Transverse colon (tissue), 4 donors: ENCODE measurements at regions of chr10 and their contacts with region 1.

Region 1: GRCh38 chr10:133600657-133601056 is 25.9 kb downstream of the FRG2B start:
- DNase-seq: no peak
- H3K4me3 ChIP-seq: no peak overlapping the region
- H3K27ac ChIP-seq: no peak overlapping the region
- H3K4me1 ChIP-seq: no peaks in the 10 kb centered on the region
- H3K27me3 ChIP-seq: peaks cover 73% of the 10 kb centered on the region
- CTCF ChIP-seq: no peak
- EP300 ChIP-seq: no peak
- POLR2A ChIP-seq: no peak

Region 2: GRCh38 chr10:132920121-132920925 is 680.3 kb before region 1 on chr10:
- in situ Hi-C with region 1: no loop called
- intact Hi-C with region 1: no loop called
- DNase-seq: no peak
- H3K4me3 ChIP-seq: no peak overlapping the region
- H3K27ac ChIP-seq: no peak overlapping the region
- H3K4me1 ChIP-seq: no peaks in the 10 kb centered on the region
- H3K27me3 ChIP-seq: peaks cover 17% of the 10 kb centered on the region
- CTCF ChIP-seq: no peak
- EP300 ChIP-seq: no peak
- POLR2A ChIP-seq: no peak

Region 3: GRCh38 chr10:133373104-133373624 is 227.5 kb before region 1 on chr10 and contains the start of gene ECHS1:
- in situ Hi-C with region 1: no loop called
- intact Hi-C with region 1: no loop called
- DNase-seq: peak; percentile 97
- H3K4me3 ChIP-seq: peak within 1 kb of the TSS; percentile 60 to 87 (median 78)
- H3K27ac ChIP-seq: peak within 1 kb of the TSS; percentile 91 to 92 (median 92)
- H3K4me1 ChIP-seq: peaks cover 5 to 30% (median 21%) of the 10 kb centered on the region in 4 donors
- H3K27me3 ChIP-seq: no peaks in the 10 kb centered on the region
- CTCF ChIP-seq: no peak
- EP300 ChIP-seq: no peak
- POLR2A ChIP-seq: peak; percentile 77
- total RNA-seq, gene ECHS1: 48.3 to 165 (median 120) TPM

Region 4: GRCh38 chr10:133438711-133439273 is 161.9 kb before region 1 on chr10:
- in situ Hi-C with region 1: no loop called
- intact Hi-C with region 1: no loop called
- DNase-seq: no peak
- H3K4me3 ChIP-seq: no peak overlapping the region
- H3K27ac ChIP-seq: no peak overlapping the region
- H3K4me1 ChIP-seq: no peaks in the 10 kb centered on the region
- H3K27me3 ChIP-seq: no peaks in the 10 kb centered on the region
- CTCF ChIP-seq: peak in 1 of 5 experiments; percentile 8
- EP300 ChIP-seq: no peak
- POLR2A ChIP-seq: no peak

Region 5: DNA sequence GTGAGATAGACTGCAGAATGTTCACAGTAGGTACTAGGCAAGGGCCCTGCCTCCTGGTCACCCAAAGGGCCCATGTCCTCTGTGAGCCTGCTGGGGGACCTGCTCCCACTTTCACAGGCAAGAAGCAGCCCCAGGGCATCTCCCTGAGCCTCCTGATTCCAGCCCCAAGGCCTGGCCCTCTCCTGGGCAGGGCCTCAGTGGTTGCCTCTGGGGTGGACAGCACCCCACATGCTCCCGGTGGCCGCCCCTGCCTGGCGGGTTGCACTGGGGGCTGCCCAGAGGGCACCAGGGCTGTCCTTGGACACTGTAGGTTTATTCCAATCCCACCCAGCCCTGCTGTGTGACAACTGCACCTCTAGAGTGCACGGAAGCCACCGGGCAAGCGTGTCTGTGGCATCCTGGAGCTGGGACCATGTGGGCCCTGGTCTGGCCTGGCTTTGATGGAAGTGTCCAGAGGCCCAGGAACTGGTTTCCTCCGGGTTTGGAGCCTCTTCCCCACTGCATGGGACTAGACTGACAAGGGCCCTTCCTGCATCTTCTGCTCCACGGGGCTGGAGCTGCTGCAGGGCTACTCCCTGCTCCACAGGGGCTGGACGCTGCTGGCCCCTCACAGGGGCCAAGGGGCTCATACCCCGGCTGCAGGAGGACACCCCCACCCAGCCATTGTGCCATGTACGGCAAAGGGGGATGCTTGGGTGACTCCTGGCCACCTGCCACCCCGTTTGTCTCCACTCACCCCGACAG is 10.3 kb before region 1 on chr10:
- in situ Hi-C with region 1: no loop called
- intact Hi-C with region 1: loop called (anchors 1 kb)
- DNase-seq: no peak
- H3K4me3 ChIP-seq: no peak overlapping the region
- H3K27ac ChIP-seq: no peak overlapping the region
- H3K4me1 ChIP-seq: no peaks in the 10 kb centered on the region
- H3K27me3 ChIP-seq: peaks cover 27% of the 10 kb centered on the region
- CTCF ChIP-seq: no peak
- EP300 ChIP-seq: no peak
- POLR2A ChIP-seq: no peak